ENCODE measurements at regions of chr4 and their contacts with region 1.

Region 1: DNA sequence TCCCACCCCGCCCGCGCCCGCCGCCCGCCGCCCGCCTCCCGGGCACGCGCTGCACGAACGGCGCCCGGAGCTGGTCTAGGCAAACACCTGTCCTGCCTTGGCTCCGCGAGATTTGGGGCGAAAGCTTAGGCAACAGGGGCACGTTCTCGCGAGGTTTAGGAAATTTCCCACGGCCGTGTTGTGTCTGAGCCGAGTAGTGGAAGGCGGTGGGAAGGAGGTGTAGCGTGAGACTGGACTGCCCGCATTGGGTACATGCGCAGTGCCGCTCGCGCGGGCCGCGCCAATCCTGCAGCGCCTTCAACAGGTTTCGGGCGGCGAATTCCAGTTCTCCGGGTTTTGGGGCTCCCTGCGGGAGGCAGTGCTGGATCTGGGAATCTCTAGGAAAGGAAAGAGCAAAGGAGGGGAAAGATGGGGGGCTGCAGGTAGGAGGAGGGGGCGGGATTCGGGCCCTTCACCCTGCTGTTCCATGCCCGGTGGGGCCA is 1.3 kb upstream of the RBPJ start:
- H3K4me3 Mint-ChIP-seq: peak overlapping the region; percentile 94
- H3K27ac Mint-ChIP-seq: peak overlapping the region; percentile 98
- H3K4me1 Mint-ChIP-seq: peaks cover 42% of the 10 kb centered on the region
- H3K27me3 Mint-ChIP-seq: no peaks in the 10 kb centered on the region

Region 2: DNA sequence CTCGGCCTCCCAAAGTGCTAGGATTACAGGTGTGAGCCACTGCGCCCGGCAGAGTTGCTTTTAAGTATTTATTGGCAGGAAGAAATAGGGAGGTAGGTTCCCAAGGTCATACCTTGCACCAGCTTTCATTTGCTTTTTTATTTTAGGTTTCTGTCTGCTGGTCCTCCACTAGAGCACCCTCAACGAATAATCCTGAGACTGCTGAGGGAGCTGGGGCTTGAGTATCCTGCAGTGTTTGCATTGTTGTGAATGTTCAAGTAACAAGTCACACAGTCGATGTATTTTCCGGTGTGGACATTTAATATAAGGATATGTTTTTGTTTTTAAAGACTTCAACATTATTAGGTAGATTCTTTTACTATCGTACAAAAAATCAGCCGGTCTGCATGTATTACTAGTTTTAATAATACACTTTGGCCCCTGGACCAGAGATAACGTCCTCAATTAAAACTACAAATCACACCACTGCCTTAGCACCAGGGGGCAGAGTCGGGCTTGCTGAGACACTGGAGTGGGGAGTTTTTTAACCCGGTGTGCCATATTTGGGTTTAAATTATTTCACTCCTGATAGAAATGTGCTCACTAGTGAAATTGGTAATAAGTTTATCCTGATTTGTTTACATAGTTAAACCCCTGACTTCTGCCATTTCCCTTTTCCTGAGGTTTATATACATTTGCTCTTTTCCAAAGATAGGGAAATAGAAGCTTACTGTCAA is 393.9 kb before region 1 on chr4:
- intact Hi-C with region 1: loop called (anchors 10 kb)
- H3K4me3 Mint-ChIP-seq: no peak overlapping the region
- H3K27ac Mint-ChIP-seq: no peak overlapping the region
- H3K4me1 Mint-ChIP-seq: peaks cover 24% of the 10 kb centered on the region
- H3K27me3 Mint-ChIP-seq: no peaks in the 10 kb centered on the region

Region 3: DNA sequence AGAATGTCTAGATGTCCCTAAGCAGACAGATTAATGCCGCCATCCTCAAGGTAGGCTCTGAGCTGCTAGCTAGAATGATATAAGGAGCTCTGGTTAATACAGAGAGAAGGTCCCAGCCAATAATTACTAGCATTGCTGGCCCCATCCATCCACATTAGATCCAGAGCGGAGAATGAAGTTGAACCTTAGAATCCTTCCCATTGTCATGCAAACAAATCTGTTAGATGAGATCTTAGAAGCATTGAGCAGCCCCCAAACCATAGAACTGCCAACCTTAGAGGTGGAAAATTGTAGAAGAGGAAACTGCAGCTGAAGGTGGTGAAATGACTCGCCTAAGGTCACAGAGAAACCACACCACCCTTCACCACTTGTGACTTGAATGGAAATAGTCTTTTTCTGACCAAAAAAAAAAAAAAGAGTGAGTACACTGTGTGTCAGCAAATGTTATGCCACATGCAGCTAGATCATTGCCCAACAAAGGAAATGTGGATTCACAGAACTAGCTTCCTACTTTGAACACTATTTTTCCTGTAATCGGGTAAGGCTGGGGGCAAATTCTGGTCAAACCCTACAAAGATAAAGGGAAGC is 243.4 kb before region 1 on chr4:
- intact Hi-C with region 1: loop called (anchors 2 kb)
- H3K4me3 Mint-ChIP-seq: no peak overlapping the region
- H3K27ac Mint-ChIP-seq: peak overlapping the region; percentile 97
- H3K4me1 Mint-ChIP-seq: peaks cover 83% of the 10 kb centered on the region
- H3K27me3 Mint-ChIP-seq: no peaks in the 10 kb centered on the region

Region 4: DNA sequence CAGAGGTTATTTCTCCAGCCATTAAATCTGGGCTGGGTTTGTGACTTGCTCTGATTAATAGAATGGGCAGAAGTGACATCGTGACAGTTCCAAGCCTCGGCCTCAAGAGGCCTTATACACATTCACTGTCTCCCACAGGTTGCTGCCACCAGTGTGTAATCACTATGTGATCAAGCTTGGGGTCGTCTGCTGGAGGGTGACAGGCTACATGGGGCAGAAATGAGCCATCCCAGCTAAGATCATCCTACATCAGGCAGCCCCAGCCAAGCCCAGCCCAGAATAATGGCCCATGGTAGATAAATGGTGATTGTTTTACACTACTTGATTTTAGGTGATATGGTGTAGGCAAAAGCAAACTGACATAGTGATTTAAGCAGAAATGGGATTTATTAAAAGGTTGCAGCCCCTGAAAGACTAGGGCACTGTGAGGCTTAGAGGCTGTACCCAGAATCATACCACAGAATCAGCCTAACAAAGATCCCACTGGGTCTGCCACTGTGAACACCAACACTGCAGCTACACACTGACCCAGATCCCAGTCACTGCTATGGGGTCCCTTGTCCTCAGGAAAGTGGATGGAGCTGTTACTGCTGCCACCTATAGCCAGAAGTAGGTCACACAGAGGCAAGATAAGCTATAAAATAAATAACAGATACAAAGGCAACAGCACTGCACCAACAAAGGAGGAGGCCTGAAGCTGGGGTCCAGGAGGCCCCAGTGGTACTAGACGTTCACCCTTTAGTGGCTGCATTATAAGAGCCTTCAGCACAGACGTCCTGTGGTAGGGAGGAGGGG is 158.3 kb before region 1 on chr4:
- intact Hi-C with region 1: loop called (anchors 5 kb)
- H3K4me3 Mint-ChIP-seq: no peak overlapping the region
- H3K27ac Mint-ChIP-seq: peak overlapping the region; percentile 83
- H3K4me1 Mint-ChIP-seq: peaks cover 62% of the 10 kb centered on the region
- H3K27me3 Mint-ChIP-seq: no peaks in the 10 kb centered on the region

Region 5: GRCh38 chr4:26238778-26239679 is 80.5 kb before region 1 on chr4:
- intact Hi-C with region 1: loop called (anchors 1 kb)
- H3K4me3 Mint-ChIP-seq: peak overlapping the region; percentile 14
- H3K27ac Mint-ChIP-seq: peak overlapping the region; percentile 94
- H3K4me1 Mint-ChIP-seq: peaks cover 29% of the 10 kb centered on the region
- H3K27me3 Mint-ChIP-seq: no peaks in the 10 kb centered on the region

Region 6: GRCh38 chr4:26288355-26288909 is 31.1 kb before region 1 on chr4:
- intact Hi-C with region 1: loop called (anchors 1 kb)
- H3K4me3 Mint-ChIP-seq: peak overlapping the region; percentile 32
- H3K27ac Mint-ChIP-seq: peak overlapping the region; percentile 96
- H3K4me1 Mint-ChIP-seq: peaks cover 37% of the 10 kb centered on the region
- H3K27me3 Mint-ChIP-seq: no peaks in the 10 kb centered on the region

Measured in dendritic cell treated with granulocyte-macrophage colony-stimulating factor and Interleukin-4, amounts not matched to agents 40 ng/mL and 50 ng/mL, for 4 days (primary cell).